Panc1 (cell line): ENCODE measurements at regions of chr15 and their contacts with region 1.

Region 1: DNA sequence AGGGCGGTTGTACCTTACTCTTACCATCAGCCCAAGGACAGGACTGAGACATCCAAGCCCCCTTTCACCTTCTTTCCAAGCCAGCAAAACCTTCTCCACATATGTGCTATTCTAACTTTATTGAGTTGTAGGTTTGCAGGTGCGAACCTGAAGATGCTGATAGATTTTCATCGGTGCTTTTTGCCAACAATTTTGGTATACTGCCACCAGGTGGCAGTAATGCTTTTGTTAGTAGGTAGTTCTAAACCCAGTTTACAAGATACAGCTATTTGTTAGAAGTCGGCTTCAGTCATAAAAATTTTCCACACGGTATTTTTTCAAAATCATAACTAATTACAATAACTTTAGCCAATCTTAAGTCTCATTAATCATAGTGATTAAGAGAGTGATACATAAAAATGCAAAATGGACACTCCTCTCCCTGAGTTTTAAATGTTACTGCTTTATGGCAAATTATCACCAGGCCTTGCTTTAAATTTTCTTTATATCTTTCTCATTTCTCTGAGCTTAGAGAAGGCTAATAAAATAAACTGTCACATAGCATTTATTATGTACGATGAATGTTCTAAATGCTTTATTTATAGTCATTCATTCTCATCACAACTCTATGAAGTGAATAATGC is 636 bp downstream of the TBC1D21 start:
- DNase-seq: peak; percentile 46
- ATAC-seq: peak; percentile 74
- H3K4me3 ChIP-seq: no peak overlapping the region
- H3K27ac ChIP-seq: no peak overlapping the region
- H3K4me1 ChIP-seq: no peaks in the 10 kb centered on the region
- H3K27me3 ChIP-seq: peaks cover 37% of the 10 kb centered on the region
- CTCF ChIP-seq: peak; percentile 80

Region 2: GRCh38 chr15:72375847-72376581 is 1498.0 kb before region 1 on chr15 and contains the start of gene HEXA:
- CTCF ChIA-PET with region 1: no interaction called
- POLR2A ChIA-PET with region 1: interaction called, 10 read pairs
- in situ Hi-C with region 1: no loop called
- intact Hi-C with region 1: no loop called
- DNase-seq: peak; percentile 73
- ATAC-seq: peak; percentile 96
- H3K4me3 ChIP-seq: peak within 1 kb of the TSS; percentile 78 to 79
- H3K27ac ChIP-seq: peak within 1 kb of the TSS; percentile 93
- H3K4me1 ChIP-seq: peaks cover 8% of the 10 kb centered on the region; the same call in 1 of the 2 replicates
- H3K27me3 ChIP-seq: no peaks in the 10 kb centered on the region
- CTCF ChIP-seq: no peak
- total RNA-seq, gene HEXA: 199 TPM

Region 3: GRCh38 chr15:72671535-72671934 is 1202.5 kb before region 1 on chr15:
- CTCF ChIA-PET with region 1: no interaction called
- POLR2A ChIA-PET with region 1: no interaction called
- in situ Hi-C with region 1: no loop called
- intact Hi-C with region 1: no loop called
- DNase-seq: no peak
- ATAC-seq: no peak
- H3K4me3 ChIP-seq: no peak overlapping the region
- H3K27ac ChIP-seq: no peak overlapping the region
- H3K4me1 ChIP-seq: peaks cover 5% of the 10 kb centered on the region
- H3K27me3 ChIP-seq: no peaks in the 10 kb centered on the region; the same call in 1 of the 2 replicates
- CTCF ChIP-seq: no peak

Region 4: DNA sequence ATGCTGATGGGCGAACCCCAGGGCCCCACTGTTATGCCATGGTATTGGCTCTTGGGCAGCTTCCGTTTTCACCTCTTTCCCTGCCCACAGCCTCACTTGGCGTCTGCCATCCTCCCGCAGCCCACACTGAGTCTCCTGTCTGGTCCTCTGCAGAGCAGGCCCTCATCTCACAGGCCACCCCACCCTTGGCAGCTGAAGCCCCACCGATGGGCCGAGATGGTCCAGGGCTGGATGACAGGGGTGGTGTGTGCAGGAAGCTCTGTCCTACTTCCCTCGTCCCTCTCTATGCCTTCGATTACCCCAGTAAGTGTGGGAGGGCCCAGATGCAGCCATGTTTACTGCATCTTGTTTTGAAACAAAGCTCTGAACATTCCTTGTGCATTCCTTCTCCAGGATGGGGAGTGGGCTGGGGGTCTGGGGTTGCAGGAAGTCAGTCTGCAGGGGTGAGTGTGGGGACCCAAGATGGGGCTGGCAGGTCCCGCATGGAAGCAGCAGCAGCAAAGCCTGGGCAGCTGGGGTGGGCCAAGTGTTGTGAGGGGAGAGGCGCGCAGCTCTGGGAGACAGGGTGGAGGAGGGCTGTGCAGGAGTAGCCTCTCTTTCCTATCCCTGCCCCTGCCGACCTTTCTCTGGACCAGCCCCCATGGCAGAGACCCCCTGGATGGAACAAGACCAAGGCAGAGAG is 20.3 kb after region 1 on chr15:
- CTCF ChIA-PET with region 1: interaction called, 10 read pairs
- POLR2A ChIA-PET with region 1: no interaction called
- in situ Hi-C with region 1: no loop called
- intact Hi-C with region 1: no loop called
- DNase-seq: no peak
- ATAC-seq: no peak
- H3K4me3 ChIP-seq: no peak overlapping the region
- H3K27ac ChIP-seq: no peak overlapping the region
- H3K4me1 ChIP-seq: no peaks in the 10 kb centered on the region
- H3K27me3 ChIP-seq: peaks cover 2% of the 10 kb centered on the region; the same call in 1 of the 2 replicates
- CTCF ChIP-seq: no peak

Region 5: DNA sequence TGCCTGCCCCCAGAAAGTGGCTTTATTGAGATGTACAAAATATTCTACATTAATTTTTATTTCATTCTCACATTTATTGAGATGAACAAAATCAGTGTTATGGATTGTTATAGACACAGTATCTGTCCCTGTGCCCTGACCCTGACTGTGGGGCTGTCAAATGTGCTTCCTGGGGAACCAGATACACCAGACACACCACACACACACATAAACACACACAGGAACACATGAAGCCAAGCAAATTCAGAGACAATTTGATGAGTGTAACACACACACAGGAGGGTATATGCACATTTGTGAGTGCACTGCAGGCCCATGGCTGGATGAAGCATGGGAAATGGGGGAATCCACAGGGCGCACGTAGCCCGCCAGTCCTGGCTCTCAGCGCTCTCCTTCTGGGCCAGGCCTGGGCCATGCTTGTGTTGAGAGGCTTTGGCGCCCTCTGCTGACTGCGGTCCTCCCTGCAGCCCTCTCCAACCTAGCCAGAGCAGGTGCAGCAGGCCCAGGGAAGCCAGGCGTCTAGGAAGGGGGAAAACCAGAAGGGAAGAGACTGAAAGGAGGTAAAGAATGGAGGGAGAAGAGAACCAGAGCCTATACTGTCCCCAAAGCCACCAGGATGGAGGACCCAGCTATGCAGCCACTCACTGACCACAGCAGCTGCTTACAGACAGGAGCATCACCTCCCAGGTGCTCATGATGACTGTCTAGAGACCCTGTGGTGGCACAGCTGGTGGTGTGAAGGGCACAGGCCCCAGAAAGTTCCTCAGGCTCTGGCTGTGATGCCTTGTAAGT is 34.2 kb after region 1 on chr15:
- CTCF ChIA-PET with region 1: interaction called, 18 read pairs
- POLR2A ChIA-PET with region 1: no interaction called
- in situ Hi-C with region 1: no loop called
- intact Hi-C with region 1: loop called (anchors 2 kb)
- DNase-seq: no peak
- ATAC-seq: peak; percentile 100
- H3K4me3 ChIP-seq: no peak overlapping the region
- H3K27ac ChIP-seq: no peak overlapping the region
- H3K4me1 ChIP-seq: no peaks in the 10 kb centered on the region
- H3K27me3 ChIP-seq: no peaks in the 10 kb centered on the region; the same call in 1 of the 2 replicates
- CTCF ChIP-seq: peak; percentile 95

Region 6: DNA sequence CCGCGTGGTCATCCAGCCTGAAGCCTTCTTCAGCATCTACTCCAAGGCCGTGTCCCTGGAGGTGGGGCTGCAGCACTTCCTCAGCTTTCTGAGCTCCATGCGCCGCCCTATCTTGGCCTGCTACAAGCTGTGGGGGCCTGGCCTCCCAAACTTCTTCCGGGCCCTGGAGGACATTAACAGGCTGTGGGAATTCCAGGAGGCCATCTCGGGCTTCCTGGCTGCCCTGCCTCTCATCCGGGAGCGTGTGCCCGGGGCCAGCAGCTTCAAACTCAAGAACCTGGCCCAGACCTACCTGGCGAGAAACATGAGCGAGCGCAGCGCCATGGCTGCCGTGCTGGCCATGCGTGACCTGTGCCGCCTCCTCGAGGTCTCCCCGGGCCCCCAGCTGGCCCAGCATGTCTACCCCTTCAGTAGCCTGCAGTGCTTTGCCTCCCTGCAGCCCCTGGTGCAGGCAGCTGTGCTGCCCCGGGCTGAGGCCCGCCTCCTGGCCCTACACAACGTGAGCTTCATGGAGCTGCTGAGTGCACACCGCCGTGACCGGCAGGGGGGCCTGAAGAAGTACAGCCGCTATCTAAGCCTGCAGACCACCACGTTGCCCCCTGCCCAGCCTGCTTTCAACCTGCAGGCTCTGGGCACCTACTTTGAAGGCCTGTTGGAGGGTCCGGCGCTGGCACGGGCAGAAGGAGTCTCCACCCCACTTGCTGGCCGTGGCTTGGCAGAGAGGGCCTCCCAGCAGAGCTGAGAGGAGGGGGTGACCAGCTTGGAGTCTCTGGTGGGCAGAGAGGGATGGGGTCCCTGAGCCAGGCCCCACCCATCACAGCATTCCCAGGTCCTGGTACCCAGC is 170.5 kb after region 1 on chr15:
- CTCF ChIA-PET with region 1: no interaction called
- POLR2A ChIA-PET with region 1: no interaction called
- in situ Hi-C with region 1: no loop called
- intact Hi-C with region 1: no loop called
- DNase-seq: no peak
- ATAC-seq: no peak
- H3K4me3 ChIP-seq: no peak overlapping the region
- H3K27ac ChIP-seq: no peak overlapping the region
- H3K4me1 ChIP-seq: no peaks in the 10 kb centered on the region
- H3K27me3 ChIP-seq: no peaks in the 10 kb centered on the region
- CTCF ChIP-seq: no peak